AG04450 (cell line): ENCODE measurements at regions of chr4 and their contacts with region 1.

Region 1: GRCh38 chr4:120056246-120056645 is 10.4 kb downstream of the MAD2L1 start:
- DNase-seq: no peak
- H3K4me3 ChIP-seq: no peak overlapping the region
- H3K27ac ChIP-seq: no peak overlapping the region
- H3K27me3 ChIP-seq: no peaks in the 10 kb centered on the region
- CTCF ChIP-seq: peak; percentile 38; the same call in 1 of the 2 replicates

Region 2: DNA sequence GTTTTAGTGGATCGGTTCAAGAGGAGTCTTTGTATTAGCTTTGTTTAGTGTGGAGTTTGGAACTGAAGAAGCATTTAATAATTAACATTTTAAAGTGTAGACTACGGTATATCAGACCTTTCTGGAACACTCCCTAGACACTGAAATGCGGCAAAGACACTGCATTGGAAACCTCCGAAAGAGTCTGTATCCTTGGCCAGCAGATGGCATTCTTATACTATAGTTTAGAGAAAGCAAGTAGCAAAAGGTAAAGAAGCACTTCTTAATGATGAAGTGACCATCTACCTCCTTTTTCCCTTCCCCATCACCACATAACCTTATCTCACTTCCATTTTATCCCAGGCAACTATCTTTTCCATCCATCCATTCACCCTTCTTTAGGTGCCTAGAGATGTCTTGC is 741.9 kb before region 1 on chr4:
- CTCF ChIA-PET with region 1: interaction called, 52 read pairs
- POLR2A ChIA-PET with region 1: no interaction called
- DNase-seq: no peak
- H3K4me3 ChIP-seq: no peak overlapping the region
- H3K27ac ChIP-seq: no peak overlapping the region
- H3K27me3 ChIP-seq: no peaks in the 10 kb centered on the region
- CTCF ChIP-seq: peak; percentile 64

Region 3: DNA sequence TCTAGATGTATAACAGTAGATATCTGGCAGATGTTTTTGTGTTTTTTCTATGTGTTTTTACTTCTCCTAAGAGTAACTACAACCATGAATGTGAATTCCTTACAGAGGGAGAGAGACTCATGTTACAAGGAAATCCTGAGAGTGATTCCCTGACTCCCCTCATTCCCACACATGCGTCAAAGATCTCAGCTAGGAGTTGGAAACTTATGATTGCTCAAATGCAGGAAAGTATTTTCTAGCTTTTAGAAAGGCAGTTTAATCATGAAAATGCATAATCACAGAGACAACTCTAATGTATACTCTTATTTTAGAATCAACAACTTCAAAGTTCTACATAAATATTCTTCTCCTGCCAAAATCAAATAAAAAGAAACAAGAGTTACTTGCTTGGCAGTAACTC is 549.4 kb before region 1 on chr4:
- CTCF ChIA-PET with region 1: interaction called, 13 read pairs
- POLR2A ChIA-PET with region 1: no interaction called
- DNase-seq: no peak
- H3K4me3 ChIP-seq: no peak overlapping the region
- H3K27ac ChIP-seq: no peak overlapping the region
- H3K27me3 ChIP-seq: no peaks in the 10 kb centered on the region
- CTCF ChIP-seq: no peak

Region 4: DNA sequence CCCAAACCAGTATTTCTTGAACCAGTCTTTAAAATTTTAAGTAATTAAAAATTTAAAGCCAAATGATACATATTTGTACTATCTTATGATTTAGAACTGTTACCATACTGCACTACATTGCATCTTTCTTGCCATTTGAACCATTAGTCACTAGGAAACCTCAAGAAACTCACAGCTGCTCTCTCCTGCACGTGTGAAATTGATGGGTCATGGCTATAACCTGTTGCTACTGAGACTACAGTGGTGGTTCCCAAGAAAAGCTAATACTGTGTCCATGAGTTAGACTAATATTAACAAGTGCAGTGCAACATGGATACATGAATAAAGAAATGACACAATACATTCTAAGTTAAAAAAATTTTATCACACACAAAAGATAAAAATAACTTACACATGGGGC is 516.0 kb before region 1 on chr4:
- CTCF ChIA-PET with region 1: interaction called, 10 read pairs
- POLR2A ChIA-PET with region 1: no interaction called
- DNase-seq: no peak
- H3K4me3 ChIP-seq: no peak overlapping the region
- H3K27ac ChIP-seq: no peak overlapping the region
- H3K27me3 ChIP-seq: no peaks in the 10 kb centered on the region
- CTCF ChIP-seq: no peak

Region 5: GRCh38 chr4:119559044-119559647 is 497.1 kb before region 1 on chr4:
- CTCF ChIA-PET with region 1: interaction called, 45 read pairs
- POLR2A ChIA-PET with region 1: no interaction called
- DNase-seq: no peak
- H3K4me3 ChIP-seq: no peak overlapping the region
- H3K27ac ChIP-seq: no peak overlapping the region
- H3K27me3 ChIP-seq: no peaks in the 10 kb centered on the region
- CTCF ChIP-seq: peak; percentile 45